Naive thymus-derived CD4-positive, alpha-beta T cell (primary cell): ENCODE measurements at regions of chr16 and their contacts with region 1.

Region 1: DNA sequence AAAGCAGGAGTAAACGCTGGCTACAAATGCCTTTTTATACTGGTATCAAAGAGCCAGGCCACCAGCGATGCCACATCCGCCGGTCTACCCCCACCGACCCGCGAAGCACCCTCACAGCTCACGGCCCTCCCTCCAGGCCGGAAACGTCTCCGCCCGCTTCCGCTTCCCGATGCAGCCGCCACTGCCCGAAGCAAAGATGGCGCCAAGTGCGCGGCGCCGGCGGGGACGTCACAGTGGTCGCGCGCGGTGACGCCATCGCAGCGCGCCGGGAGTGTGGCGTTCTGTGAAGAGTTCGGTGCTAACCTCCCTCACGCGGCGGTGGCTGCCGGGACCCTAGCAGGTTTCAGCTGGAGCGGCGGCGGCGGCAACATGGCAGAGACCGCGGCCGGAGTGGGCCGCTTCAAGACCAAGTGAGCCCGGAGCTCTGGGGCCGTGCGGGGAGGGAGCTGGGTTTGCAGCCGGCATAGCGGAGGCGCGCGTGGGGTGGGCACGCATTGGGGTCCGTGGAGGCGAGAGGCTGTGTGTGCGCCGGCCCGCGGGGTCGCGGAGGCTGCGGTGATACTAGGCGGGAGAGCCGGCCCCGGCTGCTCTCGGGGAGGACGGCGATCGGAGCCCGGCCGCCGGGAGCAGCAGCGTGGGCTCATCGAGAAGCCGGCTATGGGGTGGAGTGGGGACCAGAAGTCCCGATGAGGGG is at the start of gene TBL3:
- DNase-seq: peak; percentile 95 to 99 (median 98)
- ATAC-seq: peak; percentile 97
- H3K4me3 ChIP-seq: peak within 1 kb of the TSS; percentile 81
- H3K4me3 Mint-ChIP-seq: peak within 1 kb of the TSS; percentile 87 to 98 (median 95)
- H3K27ac ChIP-seq: peak within 1 kb of the TSS; percentile 89
- H3K27ac Mint-ChIP-seq: peak within 1 kb of the TSS; percentile 93 to 100 (median 98)
- H3K4me1 ChIP-seq: peaks cover 7 to 18% of the 10 kb centered on the region in 2 donors
- H3K4me1 Mint-ChIP-seq: peaks cover 16 to 27% (median 20%) of the 10 kb centered on the region in 7 donors
- H3K27me3 ChIP-seq: no peaks in the 10 kb centered on the region
- H3K27me3 Mint-ChIP-seq: peaks cover 0 to 4% (median 0%) of the 10 kb centered on the region in 5 donors
- total RNA-seq, gene TBL3: 17.2 to 45.2 (median 27.6) TPM

Region 2: GRCh38 chr16:1983544-1984346 is 11.8 kb after region 1 on chr16 and contains the start of gene GFER:
- CTCF ChIA-PET with region 1: no interaction called
- POLR2A ChIA-PET with region 1: interaction called, 29 read pairs
- intact Hi-C with region 1: no loop called
- DNase-seq: peak in 7 of 9 donors; percentile 24 to 88 (median 48)
- ATAC-seq: peak; percentile 89
- H3K4me3 ChIP-seq: peak within 1 kb of the TSS; percentile 71
- H3K4me3 Mint-ChIP-seq: peak within 1 kb of the TSS; percentile 66 to 90 (median 84)
- H3K27ac ChIP-seq: peak within 1 kb of the TSS; percentile 69
- H3K27ac Mint-ChIP-seq: peak within 1 kb of the TSS; percentile 4 to 89 (median 71)
- H3K4me1 ChIP-seq: peaks cover 0 to 13% of the 10 kb centered on the region in 2 donors
- H3K4me1 Mint-ChIP-seq: peaks cover 2 to 27% (median 17%) of the 10 kb centered on the region in 7 donors
- H3K27me3 ChIP-seq: peaks cover 0 to 3% of the 10 kb centered on the region in 2 donors
- H3K27me3 Mint-ChIP-seq: peaks cover 11 to 37% (median 14%) of the 10 kb centered on the region in 5 donors
- total RNA-seq, gene GFER: 14.0 to 28.2 (median 18.1) TPM

Region 3: DNA sequence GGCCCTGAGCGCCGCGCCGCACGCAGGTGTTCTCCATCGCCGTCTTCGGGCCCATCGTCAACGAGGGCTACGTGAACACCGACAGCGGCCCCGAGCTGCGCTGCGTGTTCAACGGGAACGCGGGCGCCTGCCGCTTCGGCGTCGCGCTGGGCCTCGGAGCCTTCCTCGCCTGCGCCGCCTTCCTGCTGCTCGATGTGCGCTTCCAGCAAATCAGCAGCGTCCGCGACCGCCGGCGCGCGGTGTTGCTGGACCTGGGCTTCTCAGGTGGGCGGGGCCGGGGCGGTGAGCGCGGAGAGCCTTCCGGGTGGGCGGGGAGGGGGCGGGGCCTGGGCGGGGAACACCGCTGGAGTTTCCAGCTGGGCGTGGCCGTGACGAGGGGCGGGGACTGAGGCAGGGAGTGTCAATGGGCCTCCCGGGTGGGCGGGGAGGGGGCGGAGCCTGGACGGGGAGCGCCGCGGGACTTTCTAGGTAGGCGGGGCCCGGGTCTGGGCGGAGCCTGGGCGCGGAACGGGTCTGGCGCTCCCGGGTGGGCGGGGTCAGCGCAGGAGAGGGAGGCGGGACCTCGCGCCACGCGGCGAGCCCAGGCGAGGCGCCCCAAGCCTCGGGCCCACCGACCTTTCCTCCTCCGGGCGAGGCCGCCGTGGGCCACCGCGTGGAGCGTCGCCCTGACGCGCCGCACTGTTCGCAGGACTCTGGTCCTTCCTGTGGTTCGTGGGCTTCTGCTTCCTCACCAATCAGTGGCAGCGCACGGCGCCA is 20.2 kb after region 1 on chr16:
- CTCF ChIA-PET with region 1: no interaction called
- POLR2A ChIA-PET with region 1: interaction called, 17 read pairs
- intact Hi-C with region 1: loop called in 1 of 2 experiments (anchors 1 kb)
- DNase-seq: peak; percentile 85 to 98 (median 92)
- ATAC-seq: peak; percentile 95
- H3K4me3 ChIP-seq: peak overlapping the region; percentile 39
- H3K4me3 Mint-ChIP-seq: peak overlapping the region in 9 of 10 donors; percentile 45 to 82 (median 75)
- H3K27ac ChIP-seq: peak overlapping the region; percentile 54
- H3K27ac Mint-ChIP-seq: peak overlapping the region in 7 of 9 donors; percentile 22 to 82 (median 62)
- H3K4me1 ChIP-seq: peaks cover 15 to 16% of the 10 kb centered on the region in 2 donors
- H3K4me1 Mint-ChIP-seq: peaks cover 5 to 33% (median 22%) of the 10 kb centered on the region in 7 donors
- H3K27me3 ChIP-seq: peaks cover 0 to 3% of the 10 kb centered on the region in 2 donors
- H3K27me3 Mint-ChIP-seq: peaks cover 8 to 14% (median 10%) of the 10 kb centered on the region in 5 donors

Region 4: DNA sequence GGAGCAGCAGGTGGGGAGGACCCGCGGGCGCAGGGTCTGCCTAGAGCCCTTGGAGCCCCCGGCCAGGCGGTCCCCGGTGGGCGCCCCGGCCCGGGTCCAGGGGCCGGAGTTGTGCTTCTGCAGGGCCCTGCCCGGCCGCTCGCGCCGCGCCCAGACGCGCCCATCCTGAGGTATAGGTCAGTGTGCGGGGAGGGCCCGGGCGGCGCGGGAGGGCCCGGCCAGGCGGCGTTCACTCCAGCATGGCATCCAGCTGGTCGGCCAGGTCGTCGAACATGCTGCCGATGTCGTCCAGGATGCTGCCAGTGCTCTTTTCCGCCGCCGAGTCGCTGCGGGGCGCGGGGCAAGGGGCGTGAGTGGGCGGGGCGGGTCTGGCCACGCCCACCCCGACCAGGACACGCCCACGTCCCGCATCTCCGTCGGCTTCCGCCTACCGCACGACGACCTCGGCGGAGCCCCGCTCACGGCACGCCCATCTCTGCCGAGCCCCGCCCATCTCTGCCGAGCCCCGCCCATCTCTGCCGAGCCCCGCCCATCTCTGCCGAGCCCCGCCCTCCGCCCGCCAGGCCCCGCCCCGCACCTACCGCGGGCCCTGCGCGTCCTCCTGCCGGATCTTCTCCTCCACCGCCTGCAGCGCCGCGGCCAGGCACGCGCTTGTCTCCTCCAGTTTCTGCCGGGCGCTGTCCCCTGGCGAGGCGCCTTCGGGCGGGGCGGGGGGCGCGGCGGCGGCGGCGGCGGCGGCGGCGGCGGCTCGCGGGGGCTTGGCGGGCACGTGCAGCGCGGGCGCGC is 206.6 kb after region 1 on chr16:
- CTCF ChIA-PET with region 1: no interaction called
- POLR2A ChIA-PET with region 1: no interaction called
- intact Hi-C with region 1: no loop called
- DNase-seq: peak in 7 of 9 donors; percentile 31 to 55 (median 41)
- ATAC-seq: peak; percentile 86
- H3K4me3 ChIP-seq: no peak overlapping the region
- H3K4me3 Mint-ChIP-seq: no peak overlapping the region
- H3K27ac ChIP-seq: no peak overlapping the region
- H3K27ac Mint-ChIP-seq: no peak overlapping the region
- H3K4me1 ChIP-seq: no peaks in the 10 kb centered on the region
- H3K4me1 Mint-ChIP-seq: peaks cover 0 to 4% (median 0%) of the 10 kb centered on the region in 7 donors
- H3K27me3 ChIP-seq: no peaks in the 10 kb centered on the region
- H3K27me3 Mint-ChIP-seq: no peaks in the 10 kb centered on the region